A673 (cell line): ENCODE measurements at regions of chr15 and their contacts with region 1.

Region 1: DNA sequence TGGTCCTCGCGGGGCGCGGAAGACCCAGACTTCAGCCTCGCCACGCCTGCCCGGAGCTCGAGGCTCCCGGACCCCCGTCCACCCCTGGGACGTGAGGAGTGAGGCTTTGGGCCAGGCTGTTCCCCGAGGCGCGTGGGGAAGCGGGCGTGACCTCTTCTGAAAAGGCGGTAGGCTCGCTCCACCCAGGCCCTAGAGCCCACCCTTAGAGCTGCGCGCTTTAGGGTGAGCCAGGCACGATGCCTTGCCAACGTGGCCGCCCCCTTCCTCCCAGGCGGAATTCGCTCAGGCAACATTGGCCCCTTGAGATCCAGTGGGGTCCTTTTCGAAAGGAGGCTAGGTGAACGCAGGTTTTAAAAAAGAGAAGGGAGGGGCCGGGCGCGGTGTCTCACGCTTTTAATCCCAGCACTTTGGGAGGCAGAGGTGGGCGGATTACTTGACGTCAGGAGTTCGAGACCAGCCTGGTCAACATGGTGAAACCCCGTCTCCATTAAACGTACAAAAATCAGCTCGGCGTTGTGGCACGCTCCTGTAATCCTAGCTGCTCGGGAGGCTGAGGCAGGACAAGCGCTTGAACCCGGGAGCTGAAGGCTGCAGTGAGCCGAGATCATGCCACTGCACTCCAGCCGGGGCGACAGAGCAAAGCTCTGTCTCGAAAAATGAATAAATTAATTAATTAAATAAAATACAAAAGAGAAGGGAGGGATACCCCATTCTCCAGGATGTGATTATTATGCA is 896 bp upstream of the RPP25 start:
- DNase-seq: peak; percentile 63
- H3K4me3 ChIP-seq: peak overlapping the region; percentile 66
- H3K27ac ChIP-seq: peak overlapping the region; percentile 73
- H3K4me1 ChIP-seq: peaks cover 61% of the 10 kb centered on the region
- H3K27me3 ChIP-seq: no peaks in the 10 kb centered on the region
- CTCF ChIP-seq: no peak

Region 2: GRCh38 chr15:74489518-74490338 is 467.7 kb before region 1 on chr15:
- CTCF ChIA-PET with region 1: no interaction called
- POLR2A ChIA-PET with region 1: no interaction called
- intact Hi-C with region 1: no loop called
- DNase-seq: peak; percentile 64
- H3K4me3 ChIP-seq: no peak overlapping the region
- H3K27ac ChIP-seq: no peak overlapping the region
- H3K4me1 ChIP-seq: no peaks in the 10 kb centered on the region
- H3K27me3 ChIP-seq: no peaks in the 10 kb centered on the region
- CTCF ChIP-seq: peak; percentile 77

Region 3: DNA sequence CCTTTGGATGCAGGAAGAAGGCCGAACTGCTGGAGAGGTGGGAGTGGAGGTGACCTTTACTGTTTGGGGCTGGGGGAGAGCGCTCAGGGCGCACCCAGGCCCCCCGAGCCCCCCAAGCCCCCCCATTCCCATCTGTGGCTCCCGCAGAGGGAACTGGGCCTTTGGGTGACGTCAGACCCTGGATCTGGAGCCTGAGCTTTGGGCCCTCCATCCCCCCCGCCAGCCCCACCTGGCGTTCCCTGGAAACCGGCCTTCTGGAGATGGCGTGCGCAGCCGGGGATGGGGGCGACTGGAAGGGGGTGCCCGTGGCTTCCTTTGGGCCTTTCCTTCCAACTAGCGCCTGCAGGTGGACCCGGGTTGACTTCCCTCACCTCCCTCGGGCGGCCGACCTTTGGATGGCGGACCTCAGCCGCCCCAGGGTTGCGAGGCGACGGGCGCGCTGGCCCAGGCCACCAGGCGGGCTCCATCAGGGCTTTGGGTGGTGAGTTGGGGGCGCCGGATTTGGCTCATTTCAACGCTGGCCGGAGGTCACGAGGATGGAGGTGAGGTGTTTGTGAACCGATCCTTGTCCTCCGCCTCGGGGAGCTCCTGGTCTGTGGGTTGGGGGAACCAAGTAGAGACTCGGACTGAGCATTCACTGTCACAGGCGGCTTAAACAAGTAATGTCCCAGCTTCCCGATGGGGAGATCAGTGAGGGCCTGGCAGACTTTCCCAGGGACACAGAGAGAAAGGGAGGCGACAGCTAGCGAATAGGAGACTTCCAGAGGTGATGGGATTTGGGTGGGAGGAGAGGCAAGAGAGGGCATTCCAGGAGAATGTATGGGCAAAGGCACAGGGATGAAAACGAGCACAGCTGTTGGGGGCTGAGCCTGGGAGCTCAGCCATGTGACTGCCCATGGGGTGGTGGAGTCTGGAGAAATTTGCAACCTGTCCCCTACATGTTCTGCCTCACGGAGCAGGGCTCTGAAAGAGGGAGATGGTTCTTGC is 38.6 kb after region 1 on chr15:
- CTCF ChIA-PET with region 1: no interaction called
- POLR2A ChIA-PET with region 1: interaction called, 10 read pairs
- intact Hi-C with region 1: no loop called
- DNase-seq: no peak
- H3K4me3 ChIP-seq: peak overlapping the region; percentile 60
- H3K27ac ChIP-seq: no peak overlapping the region
- H3K4me1 ChIP-seq: peaks cover 5% of the 10 kb centered on the region
- H3K27me3 ChIP-seq: peaks cover 11% of the 10 kb centered on the region
- CTCF ChIP-seq: no peak